ENCODE measurements at regions of chr17 and their contacts with region 1.

Region 1: DNA sequence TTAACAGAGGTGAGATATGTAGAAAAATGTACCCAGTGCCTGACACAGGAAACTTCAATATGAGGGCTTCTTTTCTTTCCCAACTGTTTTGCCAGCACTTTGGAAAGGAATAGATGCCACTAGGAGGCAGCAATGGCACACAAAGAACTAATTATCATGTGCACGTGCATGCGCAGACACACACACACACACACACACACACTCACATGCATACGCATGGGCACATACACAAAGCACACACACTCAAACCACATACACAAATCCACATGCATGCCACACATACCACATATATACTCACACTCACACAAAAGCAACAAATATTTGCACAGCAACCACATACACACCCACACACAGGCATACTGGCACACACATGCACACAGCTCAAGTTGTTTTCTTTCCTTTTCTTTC is 8.8 kb upstream of the CEP112 start:
- DNase-seq: peak; percentile 59
- ATAC-seq: peak; percentile 30
- H3K4me3 Mint-ChIP-seq: no peak overlapping the region
- H3K27ac Mint-ChIP-seq: no peak overlapping the region
- H3K4me1 Mint-ChIP-seq: peaks cover 16% of the 10 kb centered on the region
- H3K27me3 Mint-ChIP-seq: no peaks in the 10 kb centered on the region
- CTCF ChIP-seq: peak; percentile 73

Region 2: GRCh38 chr17:66211047-66211799 is 10.5 kb after region 1 on chr17:
- CTCF ChIA-PET with region 1: interaction called, 15 read pairs
- POLR2A ChIA-PET with region 1: interaction called, 3 read pairs
- intact Hi-C with region 1: no loop called
- DNase-seq: no peak
- ATAC-seq: no peak
- H3K4me3 Mint-ChIP-seq: no peak overlapping the region
- H3K27ac Mint-ChIP-seq: no peak overlapping the region
- H3K4me1 Mint-ChIP-seq: no peaks in the 10 kb centered on the region
- H3K27me3 Mint-ChIP-seq: peaks cover 4% of the 10 kb centered on the region
- CTCF ChIP-seq: no peak

Region 3: DNA sequence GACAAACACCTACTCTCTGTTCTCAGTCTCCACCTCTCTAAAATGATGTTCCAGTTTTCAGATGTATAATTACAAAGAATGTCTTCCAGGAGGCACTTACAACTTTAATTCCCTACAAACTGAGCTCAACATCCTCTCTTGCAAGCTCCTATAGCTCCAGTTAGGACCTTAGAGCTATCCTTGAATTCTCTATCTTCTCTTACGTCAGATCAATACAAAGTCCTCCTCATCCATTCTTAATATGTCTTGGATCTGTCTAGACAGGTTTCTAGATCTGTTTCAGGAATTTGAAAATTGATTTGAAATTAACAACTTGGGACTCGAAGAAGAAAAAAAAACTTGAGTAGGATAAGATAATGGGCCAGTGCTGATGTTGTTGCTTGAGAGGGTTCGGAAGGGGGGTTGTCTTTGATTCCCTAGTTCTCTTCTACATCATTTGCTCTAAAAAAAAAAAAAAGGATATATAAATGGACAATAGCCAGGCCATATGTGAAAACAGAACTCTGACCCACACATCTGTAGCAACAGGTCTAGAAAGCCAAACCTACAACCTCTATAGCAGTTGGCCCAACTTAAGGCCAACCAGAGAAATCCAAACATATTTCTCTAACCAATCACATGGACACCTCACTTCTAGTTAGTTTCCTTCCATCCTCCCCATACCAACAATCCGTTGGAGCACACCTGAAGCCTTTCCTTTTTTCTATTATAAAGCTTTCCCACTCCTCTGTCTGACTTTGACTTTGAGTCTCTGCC is 29.3 kb after region 1 on chr17:
- CTCF ChIA-PET with region 1: no interaction called
- POLR2A ChIA-PET with region 1: no interaction called
- intact Hi-C with region 1: no loop called
- DNase-seq: no peak
- ATAC-seq: no peak
- H3K4me3 Mint-ChIP-seq: no peak overlapping the region
- H3K27ac Mint-ChIP-seq: no peak overlapping the region
- H3K4me1 Mint-ChIP-seq: peaks cover 6% of the 10 kb centered on the region
- H3K27me3 Mint-ChIP-seq: no peaks in the 10 kb centered on the region
- CTCF ChIP-seq: no peak

Region 4: GRCh38 chr17:66310528-66311148 is 109.9 kb after region 1 on chr17:
- CTCF ChIA-PET with region 1: no interaction called
- POLR2A ChIA-PET with region 1: no interaction called
- intact Hi-C with region 1: no loop called
- DNase-seq: peak; percentile 62
- ATAC-seq: peak; percentile 25
- H3K4me3 Mint-ChIP-seq: no peak overlapping the region
- H3K27ac Mint-ChIP-seq: peak overlapping the region; percentile 96
- H3K4me1 Mint-ChIP-seq: peaks cover 90% of the 10 kb centered on the region
- H3K27me3 Mint-ChIP-seq: no peaks in the 10 kb centered on the region
- CTCF ChIP-seq: peak; percentile 33

Region 5: GRCh38 chr17:66906321-66907278 is 705.9 kb after region 1 on chr17:
- CTCF ChIA-PET with region 1: interaction called, 4 read pairs
- POLR2A ChIA-PET with region 1: no interaction called
- intact Hi-C with region 1: loop called (anchors 5 kb)
- DNase-seq: peak; percentile 84
- ATAC-seq: peak; percentile 86
- H3K4me3 Mint-ChIP-seq: no peak overlapping the region
- H3K27ac Mint-ChIP-seq: peak overlapping the region; percentile 9
- H3K4me1 Mint-ChIP-seq: peaks cover 6% of the 10 kb centered on the region
- H3K27me3 Mint-ChIP-seq: peaks cover 3% of the 10 kb centered on the region
- CTCF ChIP-seq: peak; percentile 94